Right ventricle myocardium inferior (tissue), 1 donor: ENCODE measurements at regions of chr6 and their contacts with region 1.

Region 1: GRCh38 chr6:81752138-81752920 is at the start of gene TENT5A:
- DNase-seq: peak; percentile 98
- ATAC-seq: peak; percentile 88
- total RNA-seq, gene TENT5A: 60.9 TPM

Region 2: GRCh38 chr6:80214436-80215022 is 1537.8 kb before region 1 on chr6:
- intact Hi-C with region 1: loop called (anchors 5 kb)
- DNase-seq: no peak
- ATAC-seq: peak; percentile 75

Region 3: GRCh38 chr6:81241126-81242041 is 510.9 kb before region 1 on chr6:
- intact Hi-C with region 1: loop called (anchors 2 kb)
- DNase-seq: no peak
- ATAC-seq: no peak

Region 4: DNA sequence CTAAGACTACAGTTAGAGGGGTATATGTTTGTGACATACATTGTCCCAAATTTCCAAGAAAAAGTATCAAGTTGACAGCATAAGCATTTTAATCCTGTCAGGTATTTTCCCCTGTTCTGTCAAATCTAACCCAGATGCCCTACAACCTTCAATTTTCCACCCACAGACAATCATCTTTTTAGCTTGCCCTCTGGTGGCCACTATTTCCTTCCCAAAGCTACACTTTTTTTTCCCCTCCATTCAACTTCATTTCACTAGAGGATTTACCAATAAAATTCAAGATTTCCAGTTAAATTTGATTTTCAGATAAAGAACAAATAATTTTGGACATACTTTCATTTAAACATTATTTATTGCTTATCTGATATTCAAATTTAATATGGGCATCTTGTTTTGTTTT is 286.5 kb before region 1 on chr6:
- intact Hi-C with region 1: loop called (anchors 5 kb)
- DNase-seq: no peak
- ATAC-seq: no peak

Region 5: DNA sequence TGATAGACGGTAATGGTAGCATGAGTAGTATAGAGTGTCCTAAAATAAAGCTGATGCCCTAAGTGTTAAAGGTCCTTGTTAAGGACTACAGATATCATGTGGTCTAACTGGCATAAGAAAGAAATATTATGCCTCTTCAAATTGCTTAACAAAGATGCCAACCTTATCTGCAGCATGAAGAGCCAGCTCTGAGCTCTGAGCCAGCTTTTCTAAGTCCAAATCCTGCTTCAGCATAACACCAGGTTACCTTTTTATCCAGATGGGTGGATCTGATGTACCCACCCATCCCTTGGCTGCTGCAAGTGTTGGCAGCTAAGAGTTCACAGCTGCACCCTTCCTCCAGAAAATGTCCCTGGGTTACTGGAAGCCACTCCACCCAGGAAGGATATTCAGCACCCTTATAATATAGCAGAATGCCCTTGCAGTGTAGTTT is 83.7 kb before region 1 on chr6:
- intact Hi-C with region 1: loop called (anchors 5 kb)
- DNase-seq: peak; percentile 53
- ATAC-seq: peak; percentile 94

Region 6: DNA sequence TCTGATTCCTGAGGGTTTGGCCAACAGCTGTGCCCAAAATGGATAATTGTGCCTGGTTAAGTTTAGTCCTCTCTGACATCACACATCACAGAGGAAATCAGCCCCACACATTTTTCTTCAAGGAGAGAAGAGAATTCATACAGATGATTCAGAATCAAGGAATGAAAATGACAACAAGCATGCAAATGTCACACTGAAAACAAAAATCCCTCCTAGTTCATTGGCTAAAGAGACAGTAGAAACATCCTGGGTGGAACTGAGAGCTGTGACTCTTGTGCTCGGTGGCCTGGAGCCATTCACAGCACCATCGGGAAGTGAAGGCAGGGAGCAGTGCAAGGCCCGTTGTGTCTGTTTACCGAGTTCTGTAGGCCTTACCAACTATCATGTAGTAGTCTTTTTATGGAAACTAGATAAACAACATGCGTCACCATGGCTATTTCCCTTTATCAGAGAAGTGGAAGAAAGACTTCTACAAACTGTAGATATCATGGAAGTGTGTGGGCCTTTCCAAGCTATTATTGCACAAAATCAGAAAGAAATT is 81.9 kb after region 1 on chr6:
- intact Hi-C with region 1: loop called (anchors 5 kb)
- DNase-seq: peak; percentile 68
- ATAC-seq: peak; percentile 97

Region 7: GRCh38 chr6:81847866-81848265 is 95.5 kb after region 1 on chr6:
- intact Hi-C with region 1: no loop called
- DNase-seq: no peak
- ATAC-seq: no peak

Region 8: DNA sequence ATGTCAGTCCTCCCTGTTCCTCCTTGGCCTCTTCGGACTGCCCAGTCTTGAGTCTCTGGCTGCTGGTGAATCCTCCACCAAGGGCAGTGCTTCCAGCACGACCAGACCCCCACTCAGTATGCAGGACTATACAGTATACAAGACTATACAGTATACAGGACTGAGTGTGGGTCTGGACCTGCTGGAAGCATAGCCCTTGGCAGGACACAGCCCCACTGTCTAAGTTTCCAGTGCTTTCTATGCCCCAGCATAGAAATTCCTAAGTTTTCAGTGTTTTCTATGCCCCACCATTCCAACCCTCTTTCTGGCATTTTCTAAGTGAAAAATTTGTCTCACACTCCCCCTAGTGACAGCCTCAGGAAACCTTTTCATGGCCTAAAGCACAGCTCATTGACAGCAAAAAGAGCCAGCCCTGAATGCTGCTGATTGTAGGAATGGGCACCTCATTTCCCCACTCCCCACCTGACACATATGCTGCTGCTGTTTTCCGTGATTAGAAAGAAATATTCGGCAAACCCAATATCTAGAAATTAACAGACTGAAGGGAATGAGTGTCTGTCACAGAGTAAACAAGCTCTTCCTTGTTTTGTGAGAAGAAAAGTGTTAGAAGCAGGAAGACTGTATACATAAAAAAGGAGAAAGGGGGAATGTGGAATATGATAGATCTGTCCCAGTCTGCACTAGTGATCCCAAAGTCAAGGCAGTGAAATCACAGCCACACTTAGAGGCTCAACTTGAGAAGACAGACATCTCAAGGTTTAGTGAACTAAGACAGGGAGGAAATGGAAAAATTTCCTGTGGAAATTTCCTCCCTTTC is 288.3 kb after region 1 on chr6:
- intact Hi-C with region 1: loop called (anchors 2 kb)
- DNase-seq: no peak
- ATAC-seq: peak; percentile 80